Esophagus squamous epithelium (tissue), 5 donors: ENCODE measurements at regions of chr12 and their contacts with region 1.

Region 1: GRCh38 chr12:122473543-122474318 is 27.0 kb downstream of the ZCCHC8 start:
- DNase-seq: no peak
- H3K4me3 ChIP-seq: no peak overlapping the region
- H3K27ac ChIP-seq: peak overlapping the region; percentile 33 to 76 (median 68)
- H3K4me1 ChIP-seq: peaks cover 4 to 15% (median 4%) of the 10 kb centered on the region in 3 donors
- H3K27me3 ChIP-seq: no peaks in the 10 kb centered on the region
- CTCF ChIP-seq: no peak
- POLR2A ChIP-seq: no peak

Region 2: GRCh38 chr12:122399592-122400373 is 73.9 kb before region 1 on chr12:
- intact Hi-C with region 1: loop called (anchors 2 kb)
- DNase-seq: no peak
- H3K4me3 ChIP-seq: peak overlapping the region in 3 of 4 donors; percentile 10 to 40 (median 19)
- H3K27ac ChIP-seq: peak overlapping the region; percentile 84 to 98 (median 93)
- H3K4me1 ChIP-seq: peaks cover 21 to 57% (median 38%) of the 10 kb centered on the region in 3 donors
- H3K27me3 ChIP-seq: no peaks in the 10 kb centered on the region
- CTCF ChIP-seq: peak; percentile 40 to 82 (median 77)
- POLR2A ChIP-seq: no peak